Dorsolateral prefrontal cortex (tissue), 120 donors: ENCODE measurements at regions of chrX and their contacts with region 1.

Region 1: GRCh38 chrX:54994668-54995351 is 822 bp upstream of the PFKFB1 start:
- DNase-seq: no peak
- H3K4me3 ChIP-seq: no peak overlapping the region
- H3K27ac ChIP-seq: no peak overlapping the region
- H3K27me3 ChIP-seq: peaks cover 0 to 51% (median 9%) of the 10 kb centered on the region in 45 donors
- CTCF ChIP-seq: no peak

Region 2: DNA sequence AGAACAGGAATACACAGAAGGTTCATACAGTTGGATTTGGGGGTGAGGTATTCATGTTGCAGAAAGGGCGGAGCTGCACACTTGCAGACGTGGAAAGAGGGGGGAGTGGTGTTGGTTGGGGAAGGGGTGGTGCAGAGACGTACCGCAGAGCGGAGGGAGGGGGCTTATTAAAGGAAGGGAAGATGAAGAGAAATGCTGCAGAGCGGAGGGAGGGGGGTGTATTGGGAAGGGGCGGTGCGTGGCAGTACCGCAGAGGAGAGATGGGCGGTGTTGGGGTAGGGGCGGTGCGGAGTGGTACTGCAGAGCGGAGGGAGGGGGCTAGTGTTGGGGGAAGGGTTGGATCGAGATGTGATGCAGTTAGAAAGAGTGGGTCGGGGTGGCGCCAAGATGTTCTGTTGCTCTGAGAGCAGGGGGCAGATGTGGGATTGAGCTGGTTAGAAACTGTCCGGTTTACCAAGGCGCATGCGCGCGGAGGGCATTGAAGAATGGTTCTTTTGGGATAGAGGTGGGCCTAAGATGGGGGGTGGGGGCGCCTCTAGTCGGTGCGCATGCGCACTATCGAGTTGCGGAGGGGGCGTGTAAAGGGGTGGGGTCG is 73.3 kb before region 1 on chrX:
- intact Hi-C with region 1: loop called in 1 of 2 experiments (anchors 2 kb)
- DNase-seq: peak; percentile 56 to 77 (median 68)
- H3K4me3 ChIP-seq: peak overlapping the region; percentile 34 to 74 (median 60)
- H3K27ac ChIP-seq: peak overlapping the region in 49 of 59 donors; percentile 7 to 83 (median 69)
- H3K27me3 ChIP-seq: peaks cover 0 to 30% (median 0%) of the 10 kb centered on the region in 45 donors
- CTCF ChIP-seq: peak in 1 of 56 donors; percentile 4